HEK293 (cell line): ENCODE measurements at regions of chr11 and their contacts with region 1.

Region 1: DNA sequence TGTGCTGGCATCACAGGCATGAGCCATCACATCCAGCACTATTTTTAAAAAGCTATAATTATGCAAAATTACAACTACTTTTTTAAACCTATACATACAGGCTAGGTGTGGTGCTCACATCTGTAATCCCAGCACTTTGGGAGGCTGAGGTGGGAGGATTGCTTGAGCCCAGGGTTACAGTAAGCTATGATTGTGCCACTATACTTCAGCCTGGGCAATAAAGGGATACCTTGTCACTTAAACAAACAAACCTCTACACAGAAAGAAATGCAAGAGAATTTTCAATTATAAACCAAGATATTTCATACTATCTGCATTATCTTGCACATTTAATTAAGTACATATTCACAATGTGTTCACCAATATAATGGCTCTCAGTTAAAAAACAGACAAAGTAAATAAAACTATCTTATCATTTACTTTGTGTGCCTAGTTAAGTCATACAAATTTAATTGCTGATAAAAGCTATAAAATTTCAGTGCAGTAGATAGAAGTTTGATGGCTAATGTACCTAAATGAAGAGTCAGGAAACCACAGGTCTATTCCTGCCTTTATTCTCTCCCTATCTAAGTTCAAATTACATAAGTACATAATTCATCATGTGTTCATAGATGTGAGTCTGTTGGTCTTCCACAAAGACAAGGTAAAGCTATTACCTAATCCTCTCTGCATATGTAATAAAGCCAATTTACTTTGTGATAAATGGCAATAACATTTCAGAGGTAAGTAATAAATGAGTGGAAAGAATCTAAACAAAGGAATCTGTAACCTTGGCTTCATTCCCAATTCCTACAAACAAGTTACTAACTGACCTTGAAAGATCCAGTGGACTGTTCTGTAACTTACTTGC is 9.0 kb upstream of the RDX start:
- H3K4me3 ChIP-seq: no peak overlapping the region
- H3K27ac ChIP-seq: peak overlapping the region; percentile 71
- H3K4me1 ChIP-seq: peaks cover 3% of the 10 kb centered on the region
- CTCF ChIP-seq: no peak

Region 2: DNA sequence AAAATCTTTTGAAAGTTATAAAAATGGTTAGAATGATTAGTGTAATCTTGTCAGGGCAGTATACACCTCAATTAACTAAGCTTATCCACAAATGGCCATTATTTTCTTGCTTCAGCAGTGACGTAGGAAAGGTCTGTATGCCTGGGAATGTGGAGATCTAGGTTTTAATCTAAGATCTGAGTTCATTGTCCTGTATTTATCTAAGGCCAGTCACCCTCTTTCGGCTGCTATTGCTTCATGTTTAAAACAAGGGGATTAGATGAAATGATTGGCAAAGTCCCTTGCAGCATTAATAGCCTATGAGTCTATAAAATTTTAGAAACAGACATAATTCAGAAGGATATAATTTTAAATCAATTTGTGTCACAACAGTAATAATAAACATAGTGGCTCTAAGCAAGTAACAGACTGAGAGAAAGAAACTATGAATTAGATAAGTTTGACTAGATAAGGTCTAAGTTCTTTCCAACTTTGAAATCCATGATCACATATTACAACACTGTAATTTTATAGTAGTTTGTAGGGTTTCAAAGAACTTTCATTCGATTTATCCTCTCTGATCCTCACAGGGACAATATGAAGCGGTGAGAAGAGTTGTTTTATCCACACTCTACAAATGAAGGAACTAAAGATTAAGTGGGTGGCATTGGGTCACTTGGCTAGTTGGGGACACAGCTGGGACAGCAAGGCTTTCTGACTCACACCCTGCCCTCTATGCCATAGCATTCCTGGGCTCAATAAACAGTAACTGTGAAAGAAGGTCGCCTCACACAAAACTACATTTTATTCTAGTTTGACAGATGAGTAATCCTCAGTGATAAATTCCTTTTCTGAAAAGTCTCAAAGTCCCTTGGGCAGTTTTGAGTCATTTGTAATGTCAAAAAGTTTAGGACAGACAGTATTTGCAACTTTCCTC is 51.6 kb after region 1 on chr11:
- CTCF ChIA-PET with region 1: no interaction called
- POLR2A ChIA-PET with region 1: interaction called, 10 read pairs
- H3K4me3 ChIP-seq: no peak overlapping the region
- H3K27ac ChIP-seq: no peak overlapping the region
- H3K4me1 ChIP-seq: no peaks in the 10 kb centered on the region
- CTCF ChIP-seq: no peak

Region 3: GRCh38 chr11:110479108-110480101 is 174.0 kb after region 1 on chr11:
- CTCF ChIA-PET with region 1: no interaction called
- POLR2A ChIA-PET with region 1: no interaction called
- H3K4me3 ChIP-seq: no peak overlapping the region
- H3K27ac ChIP-seq: no peak overlapping the region
- H3K4me1 ChIP-seq: no peaks in the 10 kb centered on the region
- CTCF ChIP-seq: no peak